Caco-2 (cell line): ENCODE measurements at regions of chr1 and their contacts with region 1.

Region 1: DNA sequence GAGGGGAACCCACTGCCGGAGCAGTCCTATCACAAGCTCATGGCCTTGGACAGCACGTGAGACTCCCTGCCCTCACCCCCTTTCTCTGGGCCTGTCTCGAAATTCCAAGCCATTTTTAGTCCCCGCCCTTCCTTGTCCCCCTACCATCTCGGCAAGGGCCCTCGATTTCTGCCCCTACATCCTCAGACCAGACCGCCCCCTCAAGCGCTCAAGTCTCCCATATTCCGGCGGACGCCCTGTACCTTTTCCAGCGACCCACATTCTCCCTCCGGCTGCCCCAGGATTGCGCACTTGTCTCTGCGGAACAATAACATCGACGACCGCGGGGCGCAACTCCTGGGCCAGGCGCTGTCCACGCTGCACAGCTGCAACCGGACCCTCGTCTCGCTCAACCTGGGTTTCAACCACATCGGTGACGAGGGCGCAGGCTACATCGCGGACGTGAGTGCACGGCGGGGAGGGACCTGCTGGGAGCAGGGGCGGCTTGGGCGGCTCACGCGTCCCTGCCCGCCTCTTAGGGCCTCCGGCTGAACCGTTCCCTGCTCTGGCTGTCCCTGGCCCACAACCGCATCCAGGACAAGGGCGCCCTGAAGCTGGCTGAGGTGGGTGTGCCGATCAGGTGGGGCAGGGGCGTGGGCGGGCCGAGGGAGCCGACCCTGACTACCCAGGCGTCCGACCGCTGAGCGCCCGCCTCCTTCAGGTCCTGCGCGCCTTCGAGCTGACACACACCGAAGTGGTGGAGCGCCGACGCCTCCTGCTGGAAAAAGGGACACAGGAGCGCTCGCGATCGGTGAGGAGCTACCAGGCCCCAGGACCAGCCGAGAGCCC is 7.0 kb downstream of the LRRC71 start:
- DNase-seq: peak; percentile 85 to 88
- H3K4me3 ChIP-seq: peak overlapping the region; percentile 43
- H3K4me3 Mint-ChIP-seq: peak overlapping the region; percentile 64
- H3K27ac Mint-ChIP-seq: peak overlapping the region; percentile 22
- H3K4me1 ChIP-seq: no peaks in the 10 kb centered on the region
- H3K4me1 Mint-ChIP-seq: peaks cover 6% of the 10 kb centered on the region
- H3K27me3 ChIP-seq: peaks cover 3% of the 10 kb centered on the region; the same call in 1 of the 2 replicates
- H3K27me3 Mint-ChIP-seq: peaks cover 34% of the 10 kb centered on the region
- CTCF ChIP-seq: peak; percentile 66 to 91

Region 2: GRCh38 chr1:156860113-156860627 is 67.3 kb before region 1 on chr1:
- CTCF ChIA-PET with region 1: interaction called, 15 read pairs
- POLR2A ChIA-PET with region 1: no interaction called
- intact Hi-C with region 1: no loop called
- DNase-seq: peak in 1 of 2 experiments; percentile 60
- H3K4me3 ChIP-seq: peak overlapping the region; percentile 27
- H3K4me3 Mint-ChIP-seq: peak overlapping the region; percentile 74
- H3K27ac Mint-ChIP-seq: no peak overlapping the region
- H3K4me1 ChIP-seq: peaks cover 33% of the 10 kb centered on the region
- H3K4me1 Mint-ChIP-seq: peaks cover 25% of the 10 kb centered on the region
- H3K27me3 ChIP-seq: peaks cover 7% of the 10 kb centered on the region
- H3K27me3 Mint-ChIP-seq: peaks cover 11% of the 10 kb centered on the region
- CTCF ChIP-seq: peak; percentile 88 to 90

Region 3: GRCh38 chr1:156892190-156893047 is 35.0 kb before region 1 on chr1:
- CTCF ChIA-PET with region 1: interaction called, 36 read pairs
- POLR2A ChIA-PET with region 1: no interaction called
- intact Hi-C with region 1: loop called (anchors 1 kb)
- DNase-seq: peak; percentile 91 to 95
- H3K4me3 ChIP-seq: no peak overlapping the region; the same call in 1 of the 2 replicates
- H3K4me3 Mint-ChIP-seq: peak overlapping the region; percentile 59
- H3K27ac Mint-ChIP-seq: no peak overlapping the region
- H3K4me1 ChIP-seq: peaks cover 38% of the 10 kb centered on the region
- H3K4me1 Mint-ChIP-seq: peaks cover 23% of the 10 kb centered on the region
- H3K27me3 ChIP-seq: no peaks in the 10 kb centered on the region
- H3K27me3 Mint-ChIP-seq: peaks cover 12% of the 10 kb centered on the region
- CTCF ChIP-seq: peak; percentile 83 to 89

Region 4: GRCh38 chr1:156910309-156910782 is 17.1 kb before region 1 on chr1:
- CTCF ChIA-PET with region 1: interaction called, 10 read pairs
- POLR2A ChIA-PET with region 1: no interaction called
- intact Hi-C with region 1: no loop called
- DNase-seq: peak in 1 of 2 experiments; percentile 67
- H3K4me3 ChIP-seq: no peak overlapping the region
- H3K4me3 Mint-ChIP-seq: no peak overlapping the region
- H3K27ac Mint-ChIP-seq: no peak overlapping the region
- H3K4me1 ChIP-seq: 0 out of 2 replicates have a peak, but pooled peaks cover 9% of the 10 kb centered on the region
- H3K4me1 Mint-ChIP-seq: no peaks in the 10 kb centered on the region
- H3K27me3 ChIP-seq: no peaks in the 10 kb centered on the region
- H3K27me3 Mint-ChIP-seq: no peaks in the 10 kb centered on the region
- CTCF ChIP-seq: peak; percentile 70 to 91

Region 5: DNA sequence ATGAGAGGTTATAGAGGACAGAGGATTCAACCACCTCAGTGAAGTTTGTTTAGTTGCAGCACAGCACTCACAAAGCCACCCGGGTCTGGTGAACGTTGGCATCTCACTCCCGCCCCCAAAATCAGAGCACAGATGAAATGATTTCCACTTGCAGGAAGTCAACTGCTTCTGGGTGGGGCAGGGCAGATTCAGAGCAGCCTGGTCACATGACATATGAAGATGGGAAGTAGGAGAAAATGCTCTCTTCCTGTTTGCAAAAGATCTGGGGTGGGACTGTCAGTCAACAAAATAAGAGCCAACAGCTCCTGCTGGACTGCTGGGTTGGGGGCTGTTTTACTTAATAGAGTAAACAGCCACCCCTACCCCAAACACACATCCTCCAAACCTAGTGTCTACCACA is 36.2 kb after region 1 on chr1:
- CTCF ChIA-PET with region 1: interaction called, 3 read pairs
- POLR2A ChIA-PET with region 1: interaction called, 11 read pairs
- intact Hi-C with region 1: no loop called
- DNase-seq: no peak
- H3K4me3 ChIP-seq: no peak overlapping the region
- H3K4me3 Mint-ChIP-seq: no peak overlapping the region
- H3K27ac Mint-ChIP-seq: no peak overlapping the region
- H3K4me1 ChIP-seq: peaks cover 12% of the 10 kb centered on the region
- H3K4me1 Mint-ChIP-seq: peaks cover 13% of the 10 kb centered on the region
- H3K27me3 ChIP-seq: no peaks in the 10 kb centered on the region
- H3K27me3 Mint-ChIP-seq: no peaks in the 10 kb centered on the region
- CTCF ChIP-seq: no peak

Region 6: GRCh38 chr1:156970017-156970416 is 42.6 kb after region 1 on chr1:
- CTCF ChIA-PET with region 1: interaction called, 10 read pairs
- POLR2A ChIA-PET with region 1: interaction called, 11 read pairs
- intact Hi-C with region 1: no loop called
- DNase-seq: no peak
- H3K4me3 ChIP-seq: no peak overlapping the region
- H3K4me3 Mint-ChIP-seq: no peak overlapping the region
- H3K27ac Mint-ChIP-seq: no peak overlapping the region
- H3K4me1 ChIP-seq: peaks cover 35% of the 10 kb centered on the region
- H3K4me1 Mint-ChIP-seq: peaks cover 19% of the 10 kb centered on the region
- H3K27me3 ChIP-seq: no peaks in the 10 kb centered on the region
- H3K27me3 Mint-ChIP-seq: no peaks in the 10 kb centered on the region
- CTCF ChIP-seq: peak; percentile 12 to 22

Region 7: DNA sequence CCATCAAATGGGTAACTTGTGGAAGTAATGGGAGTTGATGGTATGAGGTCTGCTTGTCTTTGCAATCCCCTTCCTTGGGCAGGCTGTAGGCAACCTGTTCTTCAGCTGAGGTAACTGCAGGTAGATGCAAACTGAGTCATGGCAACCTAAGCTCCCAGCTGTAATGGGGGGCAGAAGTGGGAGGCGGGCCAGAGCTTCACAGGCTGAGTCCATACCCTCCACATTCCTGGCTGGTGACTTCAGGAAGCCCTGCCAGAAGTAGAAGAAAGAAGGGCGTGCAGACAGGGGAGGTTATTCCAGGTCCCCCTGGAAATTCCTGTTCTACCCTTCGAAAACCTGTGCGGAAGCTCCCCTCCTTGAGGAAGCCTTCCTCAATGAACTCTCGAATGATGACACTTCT is 73.3 kb after region 1 on chr1:
- CTCF ChIA-PET with region 1: no interaction called
- POLR2A ChIA-PET with region 1: no interaction called
- intact Hi-C with region 1: no loop called
- DNase-seq: no peak
- H3K4me3 ChIP-seq: no peak overlapping the region
- H3K4me3 Mint-ChIP-seq: no peak overlapping the region
- H3K27ac Mint-ChIP-seq: no peak overlapping the region
- H3K4me1 ChIP-seq: peaks cover 16% of the 10 kb centered on the region
- H3K4me1 Mint-ChIP-seq: peaks cover 25% of the 10 kb centered on the region
- H3K27me3 ChIP-seq: no peaks in the 10 kb centered on the region
- H3K27me3 Mint-ChIP-seq: no peaks in the 10 kb centered on the region
- CTCF ChIP-seq: no peak

Region 8: DNA sequence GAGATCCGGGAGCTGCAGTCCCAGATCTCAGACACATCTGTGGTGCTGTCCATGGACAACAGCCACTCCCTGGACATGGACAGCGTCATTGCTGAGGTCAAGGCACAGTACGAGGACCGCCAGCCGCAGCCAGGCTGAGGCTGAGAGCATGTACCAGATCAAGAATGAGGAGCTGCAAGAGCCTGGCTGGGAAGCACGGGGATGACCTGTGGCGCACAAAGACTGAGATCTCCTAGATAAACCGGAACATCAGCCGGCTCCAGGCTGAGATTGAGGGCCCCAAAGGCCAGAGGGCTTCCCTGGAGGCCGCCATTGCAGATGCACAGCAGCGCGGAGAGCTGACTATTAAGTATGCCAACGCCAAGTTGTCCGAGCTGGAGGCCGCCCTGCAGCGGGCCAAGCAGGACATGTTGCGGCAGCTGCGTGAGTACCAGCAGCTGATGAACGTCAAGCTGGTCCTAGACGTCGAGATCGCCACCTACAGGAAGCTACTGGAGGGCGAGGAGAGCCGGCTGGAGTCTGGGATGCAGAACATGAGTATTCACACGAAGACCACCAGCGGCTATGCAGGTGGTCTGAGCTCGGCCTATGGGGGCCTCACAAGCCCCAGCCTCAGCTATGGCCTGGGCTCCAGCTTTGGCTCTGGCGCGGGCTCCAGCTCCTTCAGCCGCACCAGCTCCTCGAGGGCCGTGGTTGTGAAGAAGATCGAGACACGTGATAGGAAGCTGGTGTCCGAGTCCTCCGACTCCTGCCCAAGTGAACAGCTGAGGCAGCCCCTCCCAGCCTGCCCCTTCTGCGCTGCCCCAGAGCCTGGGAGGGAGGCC is 146.7 kb after region 1 on chr1:
- CTCF ChIA-PET with region 1: interaction called, 5 read pairs
- POLR2A ChIA-PET with region 1: no interaction called
- intact Hi-C with region 1: loop called (anchors 10 kb)
- DNase-seq: peak; percentile 75 to 77
- H3K4me3 ChIP-seq: peak overlapping the region; percentile 28
- H3K4me3 Mint-ChIP-seq: peak overlapping the region; percentile 63
- H3K27ac Mint-ChIP-seq: no peak overlapping the region
- H3K4me1 ChIP-seq: no peaks in the 10 kb centered on the region
- H3K4me1 Mint-ChIP-seq: peaks cover 8% of the 10 kb centered on the region
- H3K27me3 ChIP-seq: no peaks in the 10 kb centered on the region
- H3K27me3 Mint-ChIP-seq: no peaks in the 10 kb centered on the region
- CTCF ChIP-seq: peak; percentile 71 to 76